ENCODE measurements at regions of chr12 and their contacts with region 1.

Region 1: DNA sequence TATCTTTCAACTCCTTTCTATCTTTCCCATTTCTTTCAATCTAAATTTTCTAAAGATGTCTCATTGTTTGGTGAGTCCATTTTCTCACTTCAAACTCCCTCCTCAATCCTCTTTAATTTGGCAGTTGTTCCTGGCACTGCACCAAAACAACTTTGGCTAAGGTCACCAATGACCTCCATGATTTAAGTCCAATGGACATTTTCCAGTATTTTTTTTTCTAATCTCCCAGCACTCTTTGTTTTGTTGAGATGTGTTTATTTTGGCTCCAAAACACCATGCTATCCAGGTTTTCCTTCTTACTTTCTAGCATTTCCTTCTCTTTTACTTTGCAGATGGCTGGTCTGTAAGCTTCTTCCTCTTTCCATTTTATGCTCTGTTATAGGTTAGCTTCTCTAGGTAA is 42.5 kb upstream of the OTOGL start:
- DNase-seq: peak; percentile 98
- H3K4me3 ChIP-seq: no peak overlapping the region
- H3K27ac ChIP-seq: no peak overlapping the region
- H3K4me1 ChIP-seq: peaks cover 15% of the 10 kb centered on the region
- H3K27me3 ChIP-seq: peaks cover 0 to 2% of the 10 kb centered on the region in 2 experiments
- CTCF ChIP-seq: no peak
- POLR2A ChIP-seq: no peak

Region 2: DNA sequence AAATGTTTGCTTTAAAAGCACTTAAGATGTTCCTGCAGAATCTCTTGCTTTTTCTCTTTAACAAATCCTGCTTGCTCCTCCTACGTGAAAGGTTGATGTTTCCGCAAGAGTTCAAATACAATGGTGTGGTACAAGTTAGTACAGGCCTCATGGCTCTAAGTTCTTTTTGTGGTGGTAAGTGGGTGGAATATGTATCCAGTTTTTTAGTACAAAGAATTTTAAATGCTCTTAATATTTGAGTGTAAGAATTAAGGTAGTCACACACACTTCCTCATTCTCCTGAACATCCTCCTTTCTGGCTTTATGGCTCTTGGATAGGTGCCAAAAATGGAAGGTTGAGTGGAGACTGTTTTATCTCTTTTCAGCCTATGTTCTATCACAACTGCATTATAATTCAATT is 44.3 kb after region 1 on chr12:
- CTCF ChIA-PET with region 1: no interaction called
- POLR2A ChIA-PET with region 1: no interaction called
- dilution Hi-C with region 1: no loop called
- intact Hi-C with region 1: loop called (anchors 2 kb)
- DNase-seq: peak; percentile 59
- H3K4me3 ChIP-seq: no peak overlapping the region
- H3K27ac ChIP-seq: peak overlapping the region; percentile 62
- H3K4me1 ChIP-seq: peaks cover 20% of the 10 kb centered on the region
- H3K27me3 ChIP-seq: no peaks in the 10 kb centered on the region
- CTCF ChIP-seq: no peak
- POLR2A ChIP-seq: no peak

Measured in endothelial cell of umbilical vein (primary cell).